Calu3 (cell line): ENCODE measurements at regions of chr11 and their contacts with region 1.

Region 1: DNA sequence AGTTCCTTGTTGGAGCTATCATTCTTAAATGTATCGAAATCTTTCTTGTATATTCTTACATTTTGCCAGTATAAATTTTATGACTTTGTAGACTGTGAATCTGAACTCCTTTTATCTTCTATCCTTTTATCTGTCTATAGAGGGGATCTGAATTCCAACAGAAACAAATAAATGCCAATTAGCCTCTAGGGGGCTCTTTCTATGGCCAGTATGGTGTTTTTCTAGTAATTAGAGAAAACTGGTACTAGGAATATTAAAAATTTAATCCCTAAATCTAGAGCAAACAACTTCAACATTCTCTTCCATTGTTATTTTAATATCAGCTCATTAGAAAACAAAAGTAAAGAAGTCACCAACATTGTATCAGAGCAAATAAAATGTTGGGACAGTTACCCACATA is 21.5 kb upstream of the CAT start:
- DNase-seq: no peak
- H3K4me3 Mint-ChIP-seq: no peak overlapping the region
- H3K27ac Mint-ChIP-seq: no peak overlapping the region
- H3K4me1 Mint-ChIP-seq: peaks cover 15% of the 10 kb centered on the region
- H3K27me3 Mint-ChIP-seq: no peaks in the 10 kb centered on the region
- CTCF ChIP-seq: no peak

Region 2: DNA sequence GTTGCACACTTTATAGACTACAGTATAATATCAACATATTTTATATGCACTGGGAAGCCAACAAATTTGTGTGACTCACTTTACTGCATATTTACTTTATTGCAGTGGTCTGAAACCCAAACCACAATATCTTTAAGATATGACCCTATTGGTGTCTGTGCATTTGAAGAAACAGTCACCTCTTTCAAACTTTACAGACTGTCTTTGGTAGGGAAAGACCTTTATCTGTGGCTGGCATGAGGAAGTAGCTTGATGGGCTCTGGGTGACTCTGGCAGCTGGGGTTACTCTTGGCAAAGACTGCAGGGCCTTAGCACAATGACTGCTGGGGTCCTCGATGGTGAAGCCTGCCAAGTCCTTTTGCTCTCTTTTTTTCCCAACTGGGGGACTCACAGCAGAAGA is 38.1 kb before region 1 on chr11:
- CTCF ChIA-PET with region 1: no interaction called
- intact Hi-C with region 1: loop called (anchors 5 kb)
- DNase-seq: peak; percentile 55
- H3K4me3 Mint-ChIP-seq: peak overlapping the region; percentile 17
- H3K27ac Mint-ChIP-seq: peak overlapping the region; percentile 55
- H3K4me1 Mint-ChIP-seq: peaks cover 23% of the 10 kb centered on the region
- H3K27me3 Mint-ChIP-seq: no peaks in the 10 kb centered on the region
- CTCF ChIP-seq: no peak